ENCODE measurements at regions of chr11 and their contacts with region 1.

Region 1: DNA sequence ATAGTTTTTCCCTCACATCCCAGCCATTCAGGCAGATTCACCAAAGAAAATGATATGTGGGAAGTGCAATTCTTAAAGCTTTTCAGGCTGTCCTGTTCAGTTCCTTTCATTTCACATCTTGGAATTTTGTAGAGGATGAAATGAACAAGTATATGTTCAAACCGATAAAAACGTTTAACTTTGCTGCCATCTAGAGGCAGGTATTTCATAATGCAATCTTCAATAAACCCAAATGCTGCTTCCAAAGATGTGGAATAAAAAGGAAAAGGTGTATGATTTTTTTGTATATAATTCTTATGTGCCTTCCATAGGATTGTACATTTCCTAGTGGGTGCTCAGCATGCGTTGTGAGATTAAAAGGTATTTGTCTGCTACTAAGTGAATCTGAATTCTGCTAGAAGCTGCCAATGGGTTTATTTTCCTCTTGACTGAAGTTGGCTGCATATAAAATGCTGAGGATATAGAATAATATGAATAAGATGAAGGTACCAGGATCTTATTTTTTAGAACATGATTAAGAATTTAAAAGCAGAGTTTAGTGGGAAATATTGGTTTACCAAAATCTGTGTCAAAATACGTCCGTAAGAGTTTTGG is 199.3 kb downstream of the PGR start:
- DNase-seq: peak; percentile 81
- ATAC-seq: peak; percentile 68
- H3K4me3 ChIP-seq: no peak overlapping the region
- H3K27ac ChIP-seq: peak overlapping the region; percentile 43; the same call in 1 of the 2 replicates
- H3K4me1 ChIP-seq: peaks cover 10% of the 10 kb centered on the region
- H3K27me3 ChIP-seq: no peaks in the 10 kb centered on the region
- CTCF ChIP-seq: peak; percentile 76
- POLR2A ChIP-seq: no peak
- RAD21 ChIP-seq: peak; percentile 69

Region 2: DNA sequence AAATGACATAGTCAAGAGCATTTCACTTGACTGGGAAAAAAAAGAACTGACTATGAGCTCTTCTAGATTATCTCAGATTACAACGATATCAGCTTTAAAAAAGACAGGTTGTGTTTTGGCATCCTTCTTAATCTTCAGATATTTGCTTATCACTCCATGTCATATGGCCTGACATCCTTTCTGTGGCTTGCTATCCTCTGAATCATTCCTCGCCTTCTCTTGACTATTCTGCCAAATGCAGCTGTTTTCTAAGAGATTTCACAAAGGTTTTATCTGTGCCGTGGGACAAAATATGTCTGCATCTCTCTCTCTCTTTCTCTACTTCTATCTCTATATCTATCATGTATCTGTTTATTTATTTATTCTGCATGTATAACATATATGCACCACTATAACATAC is 1163.5 kb before region 1 on chr11:
- CTCF ChIA-PET with region 1: no interaction called
- POLR2A ChIA-PET with region 1: no interaction called
- dilution Hi-C with region 1: no loop called
- in situ Hi-C with region 1: no loop called
- intact Hi-C with region 1: loop called (anchors 10 kb)
- DNase-seq: no peak
- ATAC-seq: no peak
- H3K4me3 ChIP-seq: no peak overlapping the region
- H3K27ac ChIP-seq: no peak overlapping the region
- H3K4me1 ChIP-seq: no peaks in the 10 kb centered on the region
- H3K27me3 ChIP-seq: no peaks in the 10 kb centered on the region
- CTCF ChIP-seq: no peak
- POLR2A ChIP-seq: no peak
- RAD21 ChIP-seq: no peak

Region 3: GRCh38 chr11:100220801-100221200 is 709.5 kb before region 1 on chr11:
- CTCF ChIA-PET with region 1: no interaction called
- POLR2A ChIA-PET with region 1: no interaction called
- dilution Hi-C with region 1: no loop called
- in situ Hi-C with region 1: no loop called
- intact Hi-C with region 1: no loop called
- DNase-seq: no peak
- ATAC-seq: no peak
- H3K4me3 ChIP-seq: no peak overlapping the region
- H3K27ac ChIP-seq: no peak overlapping the region
- H3K4me1 ChIP-seq: no peaks in the 10 kb centered on the region
- H3K27me3 ChIP-seq: no peaks in the 10 kb centered on the region
- CTCF ChIP-seq: no peak
- POLR2A ChIP-seq: no peak
- RAD21 ChIP-seq: no peak

Region 4: DNA sequence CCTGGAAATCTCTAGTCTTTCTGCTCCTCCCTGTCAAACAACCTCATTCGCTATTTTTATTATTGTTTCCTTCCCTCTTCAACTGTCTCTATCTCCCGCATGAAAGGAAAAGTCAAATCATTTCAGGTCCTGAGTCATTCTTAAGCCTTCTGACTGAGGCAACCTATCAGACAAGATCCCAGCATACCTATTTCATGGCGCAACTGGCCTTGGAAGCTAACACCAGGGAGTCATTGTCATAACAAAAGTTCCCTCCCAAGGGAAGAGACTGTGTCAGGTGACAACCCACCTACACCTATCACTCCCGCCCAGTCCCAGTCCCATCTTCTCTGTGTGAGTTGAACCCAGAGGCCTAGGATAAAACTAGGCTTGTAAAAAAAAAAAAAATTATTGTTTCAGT is 253.4 kb before region 1 on chr11:
- CTCF ChIA-PET with region 1: interaction called, 4 read pairs
- POLR2A ChIA-PET with region 1: no interaction called
- dilution Hi-C with region 1: no loop called
- in situ Hi-C with region 1: loop called (anchors 5 kb)
- intact Hi-C with region 1: loop called (anchors 1 kb)
- DNase-seq: peak; percentile 49
- ATAC-seq: no peak
- H3K4me3 ChIP-seq: no peak overlapping the region
- H3K27ac ChIP-seq: no peak overlapping the region
- H3K4me1 ChIP-seq: peaks cover 8% of the 10 kb centered on the region
- H3K27me3 ChIP-seq: no peaks in the 10 kb centered on the region
- CTCF ChIP-seq: no peak
- POLR2A ChIP-seq: no peak
- RAD21 ChIP-seq: no peak

Region 5: GRCh38 chr11:100687630-100688395 is 242.5 kb before region 1 on chr11:
- CTCF ChIA-PET with region 1: interaction called, 4 read pairs
- POLR2A ChIA-PET with region 1: no interaction called
- dilution Hi-C with region 1: no loop called
- in situ Hi-C with region 1: no loop called
- intact Hi-C with region 1: loop called (anchors 1 kb)
- DNase-seq: peak; percentile 85
- ATAC-seq: peak; percentile 82
- H3K4me3 ChIP-seq: peak overlapping the region; percentile 87
- H3K27ac ChIP-seq: peak overlapping the region; percentile 83
- H3K4me1 ChIP-seq: no peaks in the 10 kb centered on the region
- H3K27me3 ChIP-seq: no peaks in the 10 kb centered on the region
- CTCF ChIP-seq: peak; percentile 63
- POLR2A ChIP-seq: no peak
- RAD21 ChIP-seq: peak; percentile 39

Region 6: DNA sequence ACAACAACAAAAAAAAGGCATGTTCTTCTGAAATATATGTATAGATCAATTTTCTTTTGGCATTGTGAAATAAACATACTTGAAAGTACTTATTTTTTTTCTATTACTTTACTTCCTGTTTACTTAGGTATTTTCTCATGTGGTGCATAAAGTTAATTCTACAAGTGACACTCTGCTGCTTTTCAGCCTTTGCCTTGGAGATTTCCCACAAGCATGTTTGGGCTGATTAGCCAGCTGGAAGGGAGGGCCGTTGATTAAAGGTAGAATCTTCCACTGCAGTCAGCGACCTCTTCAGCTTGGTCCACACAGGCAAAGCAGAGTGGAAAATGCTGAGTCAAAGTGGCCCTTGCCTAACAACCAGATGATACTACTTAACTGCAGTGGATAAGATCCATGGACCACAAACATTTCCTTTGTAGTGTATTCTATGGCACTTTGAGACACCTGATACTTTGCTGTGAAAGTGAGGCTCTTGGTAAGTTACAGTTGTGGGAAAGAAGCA is 67.2 kb before region 1 on chr11:
- CTCF ChIA-PET with region 1: interaction called, 4 read pairs
- POLR2A ChIA-PET with region 1: no interaction called
- dilution Hi-C with region 1: no loop called
- in situ Hi-C with region 1: loop called (anchors 5 kb)
- intact Hi-C with region 1: loop called (anchors 2 kb)
- DNase-seq: peak; percentile 95
- ATAC-seq: peak; percentile 89
- H3K4me3 ChIP-seq: no peak overlapping the region
- H3K27ac ChIP-seq: peak overlapping the region; percentile 70; the same call in 1 of the 2 replicates
- H3K4me1 ChIP-seq: peaks cover 5% of the 10 kb centered on the region; the same call in 1 of the 2 replicates
- H3K27me3 ChIP-seq: no peaks in the 10 kb centered on the region
- CTCF ChIP-seq: no peak
- POLR2A ChIP-seq: no peak
- RAD21 ChIP-seq: no peak

Region 7: DNA sequence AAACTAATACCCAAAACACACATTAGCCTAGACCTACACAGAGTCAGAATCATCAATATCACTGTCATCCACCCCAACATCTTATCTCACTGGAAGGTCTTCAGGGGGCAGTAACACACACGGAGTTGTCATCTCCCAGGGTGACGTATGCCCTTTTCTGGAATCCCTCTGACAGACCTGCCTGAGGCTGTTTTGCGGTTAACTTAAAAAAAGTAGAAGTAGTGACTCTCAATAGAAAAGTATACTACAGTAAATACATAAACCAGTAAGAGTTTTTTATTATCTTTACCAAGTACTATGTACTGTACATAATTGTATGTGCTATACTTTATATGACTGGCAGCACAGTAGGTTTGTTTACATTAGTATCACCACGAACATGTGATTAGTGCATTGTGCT is 118.8 kb after region 1 on chr11:
- CTCF ChIA-PET with region 1: no interaction called
- POLR2A ChIA-PET with region 1: no interaction called
- dilution Hi-C with region 1: no loop called
- in situ Hi-C with region 1: no loop called
- intact Hi-C with region 1: no loop called
- DNase-seq: no peak
- ATAC-seq: no peak
- H3K4me3 ChIP-seq: no peak overlapping the region
- H3K27ac ChIP-seq: no peak overlapping the region
- H3K4me1 ChIP-seq: no peaks in the 10 kb centered on the region
- H3K27me3 ChIP-seq: no peaks in the 10 kb centered on the region
- CTCF ChIP-seq: no peak
- POLR2A ChIP-seq: no peak
- RAD21 ChIP-seq: no peak